Activated CD4-positive, alpha-beta memory T cell treated with anti-CD3 and anti-CD28 coated beads for 36 hours (primary cell): ENCODE measurements at regions of chr9 and their contacts with region 1.

Region 1: GRCh38 chr9:34403554-34404380 is 27.1 kb upstream of the MYORG start:
- DNase-seq: peak; percentile 71
- H3K4me3 Mint-ChIP-seq: no peak overlapping the region
- H3K27ac Mint-ChIP-seq: no peak overlapping the region
- H3K4me1 Mint-ChIP-seq: no peaks in the 10 kb centered on the region
- H3K27me3 Mint-ChIP-seq: no peaks in the 10 kb centered on the region

Region 2: GRCh38 chr9:34386656-34387055 is 17.1 kb before region 1 on chr9:
- CTCF ChIA-PET with region 1: interaction called, 25 read pairs
- POLR2A ChIA-PET with region 1: no interaction called
- intact Hi-C with region 1: no loop called
- DNase-seq: no peak
- H3K4me3 Mint-ChIP-seq: no peak overlapping the region
- H3K27ac Mint-ChIP-seq: no peak overlapping the region
- H3K4me1 Mint-ChIP-seq: no peaks in the 10 kb centered on the region
- H3K27me3 Mint-ChIP-seq: no peaks in the 10 kb centered on the region

Region 3: DNA sequence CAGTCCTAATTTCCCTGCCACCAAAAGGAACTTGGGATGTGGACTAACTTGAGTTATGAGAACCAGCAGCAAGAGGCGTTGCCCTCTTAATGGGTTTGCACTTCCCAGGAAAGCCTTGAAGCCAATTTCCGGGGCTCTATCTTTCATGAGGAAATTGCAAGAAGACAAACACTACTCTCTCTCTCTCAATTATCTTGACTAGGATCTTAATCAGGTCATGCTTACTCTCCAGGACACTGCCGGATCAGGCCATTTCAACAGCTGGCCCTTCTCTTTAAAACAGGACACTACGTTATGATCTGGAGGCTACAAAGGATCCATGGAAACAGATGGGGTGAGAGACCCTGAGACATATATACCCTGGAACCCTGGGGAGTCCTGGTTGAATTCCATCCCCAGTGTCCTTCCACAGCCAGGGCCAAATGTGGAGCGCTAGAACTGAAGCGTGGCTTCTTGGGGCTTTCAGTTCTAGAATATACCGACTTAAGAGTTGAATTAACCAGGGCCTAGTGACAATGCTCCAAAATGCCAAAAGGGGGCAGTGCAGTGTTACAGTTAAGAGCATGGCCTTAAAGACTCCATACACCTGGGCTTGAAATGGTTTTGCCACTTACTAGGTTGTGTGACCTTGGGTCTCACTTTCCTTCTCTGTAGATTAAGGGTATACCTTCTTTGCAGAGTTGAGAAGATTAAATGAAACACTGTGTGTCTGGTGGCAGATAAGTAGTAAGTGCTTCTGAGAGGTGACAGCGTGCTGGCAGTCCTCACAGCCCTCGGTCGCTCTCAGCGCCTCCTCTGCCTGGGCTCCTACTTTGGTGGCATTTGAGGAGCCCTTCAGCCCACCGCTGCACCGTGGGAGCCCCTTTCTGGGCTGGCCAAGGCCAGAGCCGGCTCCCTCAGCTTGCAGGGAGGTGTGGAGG is 33.5 kb after region 1 on chr9:
- CTCF ChIA-PET with region 1: interaction called, 12 read pairs
- POLR2A ChIA-PET with region 1: no interaction called
- intact Hi-C with region 1: no loop called
- DNase-seq: peak; percentile 70
- H3K4me3 Mint-ChIP-seq: no peak overlapping the region
- H3K27ac Mint-ChIP-seq: no peak overlapping the region
- H3K4me1 Mint-ChIP-seq: peaks cover 8% of the 10 kb centered on the region
- H3K27me3 Mint-ChIP-seq: no peaks in the 10 kb centered on the region

Region 4: DNA sequence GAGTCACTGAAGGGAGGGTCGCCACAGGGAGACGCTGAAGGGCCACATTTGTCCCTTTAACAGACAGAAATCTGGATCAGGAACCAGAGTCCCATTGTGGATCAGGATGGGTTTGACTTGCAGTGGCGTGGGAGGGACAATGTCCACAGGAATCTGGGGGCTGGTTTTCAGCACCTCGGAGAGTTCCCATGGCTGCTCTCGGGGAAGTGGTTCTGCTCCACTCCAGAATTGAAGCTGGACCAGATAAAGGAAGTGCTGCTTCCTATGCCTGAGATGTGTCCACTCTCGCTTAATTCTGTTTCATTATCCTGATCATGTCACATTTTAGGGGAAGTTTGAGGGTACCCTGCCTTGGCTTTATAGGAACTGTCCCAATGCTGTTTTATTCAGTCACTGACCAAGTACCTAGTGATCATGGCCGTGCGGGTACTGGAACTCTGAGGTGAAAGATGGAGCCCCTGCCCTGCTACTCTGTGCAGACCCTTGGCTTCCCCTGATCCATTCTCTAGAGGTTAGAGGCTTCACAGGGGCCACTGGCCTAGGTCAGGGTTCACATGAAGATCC is 90.3 kb after region 1 on chr9:
- CTCF ChIA-PET with region 1: interaction called, 19 read pairs
- POLR2A ChIA-PET with region 1: no interaction called
- intact Hi-C with region 1: no loop called
- DNase-seq: peak; percentile 49
- H3K4me3 Mint-ChIP-seq: no peak overlapping the region
- H3K27ac Mint-ChIP-seq: no peak overlapping the region
- H3K4me1 Mint-ChIP-seq: no peaks in the 10 kb centered on the region
- H3K27me3 Mint-ChIP-seq: peaks cover 8% of the 10 kb centered on the region

Region 5: GRCh38 chr9:34522971-34523797 is 119.4 kb after region 1 on chr9 and contains the start of gene ENHO:
- CTCF ChIA-PET with region 1: interaction called, 13 read pairs
- POLR2A ChIA-PET with region 1: no interaction called
- intact Hi-C with region 1: no loop called
- DNase-seq: peak; percentile 94
- H3K4me3 Mint-ChIP-seq: peak within 1 kb of the TSS; percentile 48
- H3K27ac Mint-ChIP-seq: no peak within 1 kb of the TSS
- H3K4me1 Mint-ChIP-seq: peaks cover 16% of the 10 kb centered on the region
- H3K27me3 Mint-ChIP-seq: peaks cover 5% of the 10 kb centered on the region
- total RNA-seq, gene ENHO: 0.26 to 0.36 TPM

Region 6: GRCh38 chr9:34591248-34591916 is 187.6 kb after region 1 on chr9:
- CTCF ChIA-PET with region 1: interaction called, 41 read pairs
- POLR2A ChIA-PET with region 1: no interaction called
- intact Hi-C with region 1: loop called (anchors 5 kb)
- DNase-seq: peak; percentile 86
- H3K4me3 Mint-ChIP-seq: peak overlapping the region; percentile 53
- H3K27ac Mint-ChIP-seq: no peak overlapping the region
- H3K4me1 Mint-ChIP-seq: peaks cover 25% of the 10 kb centered on the region
- H3K27me3 Mint-ChIP-seq: peaks cover 60% of the 10 kb centered on the region